ENCODE measurements at regions of chr6 and their contacts with region 1.

Region 1: DNA sequence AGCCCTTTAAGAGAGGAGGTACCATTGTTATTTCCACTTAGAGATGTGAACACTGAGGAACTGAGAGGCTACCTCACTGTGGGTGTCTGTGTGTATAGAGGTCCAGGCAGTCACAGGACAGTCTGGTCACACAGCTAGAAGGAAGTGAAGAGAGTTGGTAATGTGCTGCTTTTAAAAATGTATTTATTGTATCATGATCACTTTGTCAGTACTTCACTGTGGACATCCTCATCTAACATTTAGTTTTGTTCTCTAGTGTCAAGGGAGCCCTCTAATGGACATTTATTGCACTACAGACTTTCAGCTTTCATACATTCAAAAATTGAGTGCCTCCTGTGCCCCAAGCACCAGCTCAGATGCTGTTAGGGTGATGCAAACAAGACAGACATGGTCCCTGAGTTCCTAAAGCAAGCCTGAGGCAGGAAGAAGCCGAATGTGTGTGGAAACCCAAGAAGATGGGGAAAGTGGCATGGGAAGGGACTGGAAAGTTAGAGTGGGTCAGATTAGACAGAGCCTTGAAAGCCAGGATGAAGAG is 123.0 kb downstream of the SLC16A10 start:
- DNase-seq: peak in 1 of 2 experiments; percentile 49
- H3K4me3 ChIP-seq: no peak overlapping the region
- H3K27ac ChIP-seq: no peak overlapping the region
- H3K4me1 ChIP-seq: peaks cover 0 to 3% (median 1%) of the 10 kb centered on the region in 4 experiments; a peak in 2 of 7 replicates
- H3K27me3 ChIP-seq: no peaks in the 10 kb centered on the region
- CTCF ChIP-seq: peak in 2 of 3 experiments; percentile 52 to 73; a peak in 3 of 4 replicates
- EP300 ChIP-seq: no peak
- POLR2A ChIP-seq: no peak
- RAD21 ChIP-seq: peak; percentile 80 to 82

Region 2: DNA sequence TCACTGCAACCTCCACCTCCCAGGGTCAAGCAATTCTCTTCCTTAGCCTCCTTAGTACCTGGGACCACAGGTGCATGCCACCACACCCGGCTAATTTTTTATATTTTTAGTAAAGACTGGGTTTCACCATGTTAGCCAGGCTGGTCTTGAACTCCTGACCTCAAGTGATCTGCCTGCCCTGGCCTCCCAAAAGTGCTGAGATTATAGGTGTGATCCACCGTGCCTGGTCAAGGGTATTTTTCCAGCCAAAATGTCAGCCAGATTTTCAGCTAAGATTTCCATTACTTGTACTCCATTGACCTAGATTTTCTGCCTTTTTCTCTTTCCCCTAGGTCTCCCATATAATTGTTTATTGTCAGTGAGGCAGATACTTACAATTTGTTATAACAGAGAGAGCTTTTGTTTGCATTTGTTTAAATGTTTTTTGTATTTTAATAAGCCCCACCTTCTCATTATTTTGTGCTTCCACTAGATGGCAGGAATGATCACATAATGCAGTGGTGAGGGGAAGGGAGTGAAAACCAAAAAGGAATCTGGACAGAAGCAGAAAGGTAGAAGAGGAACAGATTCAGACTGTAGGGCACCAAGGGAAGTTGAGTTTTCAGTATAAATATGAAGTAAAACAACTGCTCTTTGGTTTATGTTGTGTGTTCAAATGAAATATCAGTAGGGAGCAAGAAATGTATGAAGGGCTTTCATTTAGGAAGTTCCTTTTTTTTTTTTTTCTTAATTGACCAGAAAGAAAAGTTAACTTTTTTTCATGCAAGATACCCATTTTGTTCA is 198.7 kb before region 1 on chr6:
- CTCF ChIA-PET with region 1: interaction called, 59 read pairs
- POLR2A ChIA-PET with region 1: interaction called, 3 read pairs
- DNase-seq: no peak
- H3K4me3 ChIP-seq: no peak overlapping the region
- H3K27ac ChIP-seq: no peak overlapping the region
- H3K4me1 ChIP-seq: no peaks in the 10 kb centered on the region
- H3K27me3 ChIP-seq: no peaks in the 10 kb centered on the region
- CTCF ChIP-seq: peak in 2 of 3 experiments; percentile 54 to 62; a peak in 3 of 4 replicates
- EP300 ChIP-seq: no peak
- POLR2A ChIP-seq: no peak
- RAD21 ChIP-seq: peak; percentile 83 to 86

Region 3: GRCh38 chr6:111030008-111031007 is 180.0 kb before region 1 on chr6:
- CTCF ChIA-PET with region 1: interaction called, 12 read pairs
- POLR2A ChIA-PET with region 1: no interaction called
- DNase-seq: no peak
- H3K4me3 ChIP-seq: no peak overlapping the region
- H3K27ac ChIP-seq: no peak overlapping the region
- H3K4me1 ChIP-seq: peaks cover 3 to 15% (median 8%) of the 10 kb centered on the region in 4 experiments; a peak in 6 of 7 replicates
- H3K27me3 ChIP-seq: no peaks in the 10 kb centered on the region
- CTCF ChIP-seq: no peak
- EP300 ChIP-seq: no peak
- POLR2A ChIP-seq: no peak
- RAD21 ChIP-seq: no peak

Region 4: DNA sequence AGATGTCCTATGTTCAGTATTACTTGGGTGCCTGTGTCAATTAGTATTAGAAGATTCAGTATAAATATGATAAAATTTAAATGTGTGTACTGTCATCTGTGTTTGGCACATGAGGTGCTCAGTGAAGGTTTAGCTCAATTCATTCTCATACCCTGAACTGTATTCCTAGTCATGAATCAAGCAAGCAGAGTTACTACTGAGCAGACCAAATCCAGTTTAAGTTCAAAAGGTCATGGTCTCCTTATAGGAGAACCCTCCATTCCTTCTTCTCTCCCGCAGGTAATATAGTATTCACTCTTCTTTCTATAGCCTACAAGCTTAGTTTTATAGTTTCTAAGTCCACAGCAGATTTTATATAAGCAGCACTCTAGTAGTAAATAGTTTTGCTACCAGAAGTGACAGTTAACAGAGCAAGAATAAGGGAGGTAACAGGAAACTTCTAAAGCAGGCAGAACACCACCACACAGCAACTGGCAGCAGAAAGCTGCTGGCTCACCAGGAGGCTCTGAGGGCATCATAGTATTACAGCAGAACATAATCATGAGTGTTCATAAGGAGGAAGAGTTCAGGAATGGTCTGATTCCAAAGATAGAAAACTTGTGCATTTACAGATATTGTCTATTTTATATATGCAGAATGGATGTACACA is 10.2 kb after region 1 on chr6:
- CTCF ChIA-PET with region 1: interaction called, 26 read pairs
- POLR2A ChIA-PET with region 1: no interaction called
- DNase-seq: no peak
- H3K4me3 ChIP-seq: no peak overlapping the region
- H3K27ac ChIP-seq: no peak overlapping the region
- H3K4me1 ChIP-seq: no peaks in the 10 kb centered on the region
- H3K27me3 ChIP-seq: no peaks in the 10 kb centered on the region
- CTCF ChIP-seq: no peak
- EP300 ChIP-seq: no peak
- POLR2A ChIP-seq: no peak
- RAD21 ChIP-seq: no peak

Region 5: GRCh38 chr6:111228094-111228493 is 17.8 kb after region 1 on chr6:
- CTCF ChIA-PET with region 1: interaction called, 13 read pairs
- POLR2A ChIA-PET with region 1: no interaction called
- DNase-seq: no peak
- H3K4me3 ChIP-seq: no peak overlapping the region
- H3K27ac ChIP-seq: no peak overlapping the region
- H3K4me1 ChIP-seq: no peaks in the 10 kb centered on the region; a peak in 2 of 7 replicates
- H3K27me3 ChIP-seq: no peaks in the 10 kb centered on the region
- CTCF ChIP-seq: no peak
- EP300 ChIP-seq: no peak
- POLR2A ChIP-seq: no peak
- RAD21 ChIP-seq: no peak

Measured in H1 (cell line).